Activated naive CD4-positive, alpha-beta T cell treated with anti-CD3 and anti-CD28 coated beads for 36 hours (primary cell): ENCODE measurements at regions of chr11 and their contacts with region 1.

Region 1: GRCh38 chr11:8964324-8965320 is at the start of gene TMEM9B:
- DNase-seq: peak; percentile 84
- H3K4me3 Mint-ChIP-seq: peak within 1 kb of the TSS; percentile 98
- H3K27ac Mint-ChIP-seq: peak within 1 kb of the TSS; percentile 88
- H3K4me1 Mint-ChIP-seq: peaks cover 28% of the 10 kb centered on the region
- H3K27me3 Mint-ChIP-seq: no peaks in the 10 kb centered on the region
- total RNA-seq, gene TMEM9B: 13.4 to 13.6 TPM

Region 2: GRCh38 chr11:8338138-8338537 is 626.5 kb before region 1 on chr11:
- CTCF ChIA-PET with region 1: no interaction called
- intact Hi-C with region 1: loop called (anchors 1 kb)
- DNase-seq: peak; percentile 49
- H3K4me3 Mint-ChIP-seq: no peak overlapping the region
- H3K27ac Mint-ChIP-seq: no peak overlapping the region
- H3K4me1 Mint-ChIP-seq: no peaks in the 10 kb centered on the region
- H3K27me3 Mint-ChIP-seq: peaks cover 2% of the 10 kb centered on the region

Region 3: DNA sequence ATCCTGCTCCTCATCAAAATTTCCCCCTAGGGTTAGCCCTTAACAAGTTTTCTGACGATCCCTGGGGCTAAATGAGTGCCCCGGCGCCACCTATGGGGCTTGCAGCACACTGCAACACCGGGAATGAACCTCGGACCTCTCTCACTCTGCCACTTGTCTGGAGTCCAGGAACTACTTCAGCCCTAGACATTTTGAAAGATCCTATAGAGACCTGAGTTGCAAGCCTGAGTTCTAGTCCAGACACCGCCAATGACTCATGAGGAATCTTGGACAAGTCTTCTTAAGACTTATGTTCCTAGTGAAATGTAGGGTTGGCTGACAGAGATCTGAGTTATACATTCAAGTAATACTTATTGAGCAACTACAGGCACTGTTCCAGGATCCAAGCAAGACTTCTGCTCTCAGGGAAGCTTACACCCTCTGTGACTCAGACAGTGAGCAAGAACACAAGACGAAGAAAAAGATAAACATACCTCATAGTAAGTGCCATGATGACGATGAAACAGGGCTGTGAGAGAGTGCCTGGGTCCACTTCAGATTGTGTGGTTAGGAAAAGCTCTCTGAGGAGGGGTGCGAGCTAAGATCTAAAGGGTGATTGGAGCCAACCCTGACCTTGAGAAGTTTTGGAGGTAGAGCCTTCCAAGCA is 360.4 kb before region 1 on chr11:
- CTCF ChIA-PET with region 1: no interaction called
- intact Hi-C with region 1: loop called (anchors 1 kb)
- DNase-seq: peak; percentile 56
- H3K4me3 Mint-ChIP-seq: no peak overlapping the region
- H3K27ac Mint-ChIP-seq: no peak overlapping the region
- H3K4me1 Mint-ChIP-seq: no peaks in the 10 kb centered on the region
- H3K27me3 Mint-ChIP-seq: peaks cover 19% of the 10 kb centered on the region

Region 4: GRCh38 chr11:8688414-8689362 is 275.9 kb before region 1 on chr11:
- CTCF ChIA-PET with region 1: interaction called, 3 read pairs
- intact Hi-C with region 1: loop called (anchors 1 kb)
- DNase-seq: peak; percentile 90
- H3K4me3 Mint-ChIP-seq: peak overlapping the region; percentile 97
- H3K27ac Mint-ChIP-seq: peak overlapping the region; percentile 96
- H3K4me1 Mint-ChIP-seq: peaks cover 53% of the 10 kb centered on the region
- H3K27me3 Mint-ChIP-seq: no peaks in the 10 kb centered on the region

Region 5: DNA sequence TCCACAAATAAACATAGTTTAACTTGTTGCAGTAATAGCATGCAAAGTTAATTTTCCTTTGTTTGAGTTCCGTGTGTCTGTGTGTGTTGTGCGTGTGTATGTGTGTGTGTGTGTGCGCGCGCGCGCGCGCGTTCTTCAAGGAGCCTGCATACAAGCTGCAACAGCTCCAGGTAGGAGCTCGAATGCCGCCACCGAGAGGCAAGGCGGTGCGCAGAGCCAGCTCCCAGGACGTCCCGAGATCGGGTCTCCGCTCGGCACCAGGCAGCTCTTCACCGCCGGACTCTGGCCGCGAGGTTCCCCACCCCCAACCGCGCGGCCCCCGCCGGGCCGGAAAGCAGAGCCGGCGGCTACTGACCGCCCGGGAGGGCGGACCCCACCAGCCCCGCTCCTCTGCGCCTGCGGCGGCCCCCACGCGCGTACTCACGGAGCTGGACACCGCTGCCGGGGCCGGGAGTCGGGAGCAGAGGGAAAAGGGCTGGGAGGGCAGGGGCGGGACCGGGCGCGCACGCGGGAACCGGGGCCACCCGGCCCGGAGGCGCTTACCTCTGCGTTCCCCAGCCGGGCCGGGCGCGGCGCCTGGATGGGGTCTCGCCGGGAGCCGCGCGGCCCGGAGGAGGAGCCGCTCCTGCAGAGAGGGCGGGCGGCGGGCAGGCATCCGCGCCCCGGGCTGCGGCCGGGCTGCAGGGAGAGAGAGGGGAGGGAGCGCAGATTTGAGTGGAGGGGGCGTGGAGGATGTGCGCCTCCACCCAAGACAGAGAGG is 94.0 kb before region 1 on chr11:
- CTCF ChIA-PET with region 1: no interaction called
- intact Hi-C with region 1: no loop called
- DNase-seq: peak; percentile 41
- H3K4me3 Mint-ChIP-seq: peak overlapping the region; percentile 69
- H3K27ac Mint-ChIP-seq: no peak overlapping the region
- H3K4me1 Mint-ChIP-seq: peaks cover 10% of the 10 kb centered on the region
- H3K27me3 Mint-ChIP-seq: peaks cover 44% of the 10 kb centered on the region

Region 6: GRCh38 chr11:8911029-8911826 is 53.4 kb before region 1 on chr11 and contains the start of gene AKIP1:
- CTCF ChIA-PET with region 1: interaction called, 42 read pairs
- intact Hi-C with region 1: loop called (anchors 1 kb)
- DNase-seq: peak; percentile 91
- H3K4me3 Mint-ChIP-seq: peak within 1 kb of the TSS; percentile 92
- H3K27ac Mint-ChIP-seq: peak within 1 kb of the TSS; percentile 86
- H3K4me1 Mint-ChIP-seq: peaks cover 44% of the 10 kb centered on the region
- H3K27me3 Mint-ChIP-seq: no peaks in the 10 kb centered on the region
- total RNA-seq, gene AKIP1: 41.5 to 43.9 TPM

Region 7: GRCh38 chr11:9314291-9315036 is 349.8 kb after region 1 on chr11 and contains the start of gene TMEM41B:
- CTCF ChIA-PET with region 1: no interaction called
- intact Hi-C with region 1: loop called (anchors 1 kb)
- DNase-seq: peak; percentile 99
- H3K4me3 Mint-ChIP-seq: peak within 1 kb of the TSS; percentile 99
- H3K27ac Mint-ChIP-seq: peak within 1 kb of the TSS; percentile 92
- H3K4me1 Mint-ChIP-seq: peaks cover 37% of the 10 kb centered on the region
- H3K27me3 Mint-ChIP-seq: peaks cover 13% of the 10 kb centered on the region
- total RNA-seq, gene TMEM41B: 27.8 to 30.5 TPM